ENCODE measurements at regions of chr6 and their contacts with region 1.

Region 1: DNA sequence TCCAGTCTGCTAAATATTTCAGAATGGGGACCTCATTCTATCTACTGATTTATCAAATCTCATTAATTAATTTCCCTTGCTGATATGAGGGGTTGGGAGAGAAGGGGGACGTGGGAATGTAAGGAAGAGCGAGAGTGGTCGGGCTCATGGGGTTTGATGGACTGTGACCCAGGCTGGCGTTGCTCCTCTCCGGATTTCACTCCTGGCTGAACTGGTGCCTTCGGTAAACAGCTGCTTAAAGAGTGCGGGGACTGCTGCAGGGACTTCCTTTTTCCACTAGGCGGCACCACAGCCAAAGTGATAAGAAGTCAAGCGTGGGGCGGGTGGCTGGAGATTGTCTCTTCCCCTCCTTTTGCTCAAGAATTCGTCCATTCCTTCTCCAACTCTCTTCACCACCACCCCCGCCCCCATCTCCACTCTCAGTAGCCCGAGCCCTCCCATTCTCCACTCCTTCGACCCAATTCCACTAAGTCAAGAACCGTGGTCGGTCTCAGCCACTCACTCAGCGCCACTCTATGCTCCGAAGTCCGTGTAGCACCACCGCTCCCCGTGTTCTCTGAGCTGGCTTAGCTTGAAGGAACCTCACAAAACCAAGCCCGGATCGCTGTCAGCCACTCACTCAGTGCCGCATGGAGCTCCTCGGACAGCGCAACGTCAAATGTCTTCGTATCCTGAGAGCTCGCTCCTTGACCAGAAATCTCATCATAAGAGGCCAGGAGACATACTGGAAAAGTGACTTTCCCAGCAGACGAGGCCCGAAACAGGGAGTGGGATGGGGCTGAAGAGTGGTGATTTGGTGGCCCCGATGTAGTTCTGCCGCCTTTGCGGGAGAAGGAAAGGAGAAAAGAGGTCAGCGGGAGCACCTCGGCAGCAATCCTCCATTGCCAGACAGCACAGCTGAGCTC is 9.7 kb downstream of the TRIM31 start:
- DNase-seq: peak; percentile 66 to 81 (median 79)
- H3K4me3 ChIP-seq: peak overlapping the region; percentile 2 to 77 (median 12)
- H3K4me3 Mint-ChIP-seq: peak overlapping the region; percentile 81 to 97
- H3K27ac ChIP-seq: no peak overlapping the region
- H3K27ac Mint-ChIP-seq: peak overlapping the region in 5 of 7 donors; percentile 49 to 78 (median 61)
- H3K4me1 ChIP-seq: peaks cover 34 to 38% of the 10 kb centered on the region in 2 donors
- H3K4me1 Mint-ChIP-seq: peaks cover 43% of the 10 kb centered on the region
- H3K27me3 ChIP-seq: peaks cover 48 to 68% of the 10 kb centered on the region in 2 donors
- H3K27me3 Mint-ChIP-seq: peaks cover 59 to 77% (median 64%) of the 10 kb centered on the region in 3 donors
- CTCF ChIP-seq: peak; percentile 86

Region 2: DNA sequence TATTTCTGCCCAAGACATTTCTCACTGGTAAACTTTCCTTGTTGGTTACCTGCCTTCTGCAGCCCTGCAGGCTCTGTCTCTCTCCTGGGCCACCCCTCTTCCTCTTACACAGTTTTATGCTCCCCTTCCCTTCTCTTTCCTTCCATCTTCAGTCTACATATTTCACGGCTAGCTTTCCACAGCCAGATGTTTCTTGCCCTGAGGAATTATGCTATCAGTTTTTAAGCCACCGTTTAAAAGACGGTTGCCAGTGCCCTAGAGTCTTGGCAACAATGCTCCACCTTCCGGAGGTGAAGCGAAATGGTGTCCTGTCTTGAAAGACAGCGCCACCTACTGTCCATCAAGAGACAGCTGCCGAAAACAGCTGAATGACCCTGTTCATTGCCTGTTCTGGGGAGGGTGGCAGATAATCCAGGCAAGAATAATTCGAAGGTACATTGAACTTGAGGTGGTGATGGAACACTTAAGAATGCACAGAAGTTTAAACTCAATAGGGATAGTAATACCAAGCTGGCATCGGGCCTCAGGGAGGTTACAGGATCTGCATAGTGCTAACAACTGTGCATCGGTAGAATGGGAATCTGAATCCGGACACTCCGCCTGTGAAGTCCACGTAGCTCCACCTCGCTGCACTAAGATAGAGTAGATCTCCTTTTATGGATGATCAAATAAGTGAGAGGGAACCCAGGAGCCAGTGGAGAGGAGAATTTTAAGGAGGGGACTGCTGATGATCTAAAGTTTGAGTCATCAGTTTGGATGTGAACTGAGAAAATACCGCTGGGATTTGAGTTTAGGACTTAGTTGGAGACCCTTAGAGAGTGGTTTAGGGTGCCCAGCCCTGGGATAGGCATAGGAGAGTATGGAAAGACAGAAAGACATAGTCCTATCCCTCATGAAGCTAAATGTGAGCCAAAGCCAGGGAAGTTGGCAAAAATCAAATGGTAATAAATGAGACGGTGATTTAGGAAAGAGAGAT is 28.0 kb after region 1 on chr6:
- intact Hi-C with region 1: loop called (anchors 2 kb)
- DNase-seq: peak; percentile 74 to 84 (median 78)
- H3K4me3 ChIP-seq: no peak overlapping the region
- H3K4me3 Mint-ChIP-seq: peak overlapping the region in 1 of 2 donors; percentile 81
- H3K27ac ChIP-seq: no peak overlapping the region
- H3K27ac Mint-ChIP-seq: peak overlapping the region in 1 of 7 donors; percentile 4
- H3K4me1 ChIP-seq: peaks cover 3 to 8% of the 10 kb centered on the region in 2 donors
- H3K4me1 Mint-ChIP-seq: peaks cover 15% of the 10 kb centered on the region
- H3K27me3 ChIP-seq: peaks cover 46 to 75% of the 10 kb centered on the region in 2 donors
- H3K27me3 Mint-ChIP-seq: peaks cover 66 to 71% (median 67%) of the 10 kb centered on the region in 3 donors
- CTCF ChIP-seq: peak; percentile 99

Measured in CD14-positive monocyte (primary cell).